Common myeloid progenitor, CD34-positive (primary cell): ENCODE measurements at regions of chr4 and their contacts with region 1.

Region 1: DNA sequence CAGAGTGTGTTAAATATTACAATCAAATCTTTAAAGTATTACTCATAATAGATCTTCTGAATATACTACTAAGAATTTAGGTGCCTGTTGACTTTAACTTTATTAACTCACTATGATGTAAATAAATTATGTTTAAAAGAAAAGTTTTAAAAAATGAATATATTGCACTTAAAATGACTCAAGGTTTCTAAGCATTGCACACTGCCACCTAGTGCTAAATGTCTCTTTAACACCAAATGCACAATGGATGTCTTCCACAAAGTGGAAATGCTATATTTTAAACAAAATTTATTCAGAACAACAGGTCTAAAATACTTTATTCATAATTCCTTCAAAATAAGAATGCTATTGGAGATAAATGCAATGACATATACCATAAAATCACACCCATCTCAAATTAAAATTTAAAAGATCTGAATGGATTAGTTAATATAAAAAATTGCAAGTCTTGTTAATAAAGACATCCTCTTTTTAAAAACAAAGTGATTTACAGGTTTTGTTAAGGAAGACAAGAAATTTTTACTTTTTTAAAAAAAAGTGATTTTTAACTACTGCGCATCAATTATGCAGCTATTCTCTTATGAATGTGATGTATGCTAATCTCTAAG is 5.5 kb downstream of the INPP4B start:
- DNase-seq: peak; percentile 67 to 88 (median 83)
- H3K4me3 ChIP-seq: no peak overlapping the region
- H3K27ac ChIP-seq: no peak overlapping the region
- H3K4me1 ChIP-seq: peaks cover 3 to 32% (median 9%) of the 10 kb centered on the region in 4 experiments
- H3K27me3 ChIP-seq: no peaks in the 10 kb centered on the region

Region 2: DNA sequence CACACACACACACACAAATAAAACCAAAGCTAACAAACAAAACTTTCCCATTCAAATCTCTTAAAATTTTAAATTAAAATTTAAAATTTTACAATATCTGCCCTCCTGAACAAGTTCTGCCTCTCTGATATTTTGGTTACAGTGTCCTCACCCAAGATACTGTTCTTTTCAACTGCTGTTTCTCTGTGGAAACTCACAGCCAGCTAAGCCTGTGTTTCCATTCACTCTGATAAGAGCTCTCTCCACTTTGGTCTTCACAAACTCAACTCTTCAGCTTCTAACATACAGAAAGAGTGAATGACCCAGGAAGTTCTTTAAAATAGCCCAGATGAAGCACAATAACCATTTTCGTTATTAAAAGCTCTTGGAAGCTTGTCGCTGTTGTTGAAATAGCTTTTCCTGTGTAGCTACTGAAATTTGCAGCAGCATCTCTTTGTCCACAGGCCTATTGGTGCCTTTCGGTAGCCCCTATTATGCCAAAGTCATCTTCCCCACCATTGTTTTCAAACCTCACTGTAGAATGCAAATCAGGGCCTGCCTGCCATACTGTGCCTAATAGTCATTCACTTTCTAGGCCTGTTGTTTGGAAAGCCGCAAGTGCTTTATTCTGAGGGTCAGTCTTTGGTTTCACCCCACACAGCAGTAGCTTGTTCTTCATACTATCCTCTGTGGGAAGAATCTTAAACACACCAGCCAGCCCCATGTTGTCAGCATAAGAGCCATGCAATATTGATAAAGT is 13.9 kb before region 1 on chr4:
- CTCF ChIA-PET with region 1: interaction called, 13 read pairs
- POLR2A ChIA-PET with region 1: no interaction called
- DNase-seq: no peak
- H3K4me3 ChIP-seq: no peak overlapping the region
- H3K27ac ChIP-seq: no peak overlapping the region
- H3K4me1 ChIP-seq: peaks cover 0 to 13% (median 2%) of the 10 kb centered on the region in 4 experiments
- H3K27me3 ChIP-seq: no peaks in the 10 kb centered on the region

Region 3: GRCh38 chr4:142933207-142933606 is 92.6 kb after region 1 on chr4:
- CTCF ChIA-PET with region 1: no interaction called
- POLR2A ChIA-PET with region 1: no interaction called
- DNase-seq: peak in 1 of 3 donors; percentile 11
- H3K4me3 ChIP-seq: no peak overlapping the region
- H3K27ac ChIP-seq: no peak overlapping the region
- H3K4me1 ChIP-seq: no peaks in the 10 kb centered on the region
- H3K27me3 ChIP-seq: no peaks in the 10 kb centered on the region